ENCODE measurements at regions of chr13 and their contacts with region 1.

Region 1: GRCh38 chr13:32538621-32539246 is at the start of gene N4BP2L2:
- DNase-seq: peak; percentile 77
- ATAC-seq: peak; percentile 96
- H3K4me3 Mint-ChIP-seq: peak within 1 kb of the TSS; percentile 99
- H3K27ac Mint-ChIP-seq: peak within 1 kb of the TSS; percentile 100
- H3K4me1 Mint-ChIP-seq: peaks cover 50% of the 10 kb centered on the region
- H3K27me3 Mint-ChIP-seq: no peaks in the 10 kb centered on the region
- CTCF ChIP-seq: no peak
- total RNA-seq, gene N4BP2L2: 118 and 153 TPM in 2 replicates

Region 2: GRCh38 chr13:31161828-31162590 is 1376.7 kb before region 1 on chr13 and contains the start of gene HSPH1:
- CTCF ChIA-PET with region 1: no interaction called
- POLR2A ChIA-PET with region 1: no interaction called
- intact Hi-C with region 1: loop called (anchors 2 kb)
- DNase-seq: peak; percentile 99
- ATAC-seq: peak; percentile 85
- H3K4me3 Mint-ChIP-seq: peak within 1 kb of the TSS; percentile 97
- H3K27ac Mint-ChIP-seq: peak within 1 kb of the TSS; percentile 95
- H3K4me1 Mint-ChIP-seq: peaks cover 36% of the 10 kb centered on the region
- H3K27me3 Mint-ChIP-seq: no peaks in the 10 kb centered on the region
- CTCF ChIP-seq: no peak
- total RNA-seq, gene HSPH1: 107 and 112 TPM in 2 replicates

Region 3: DNA sequence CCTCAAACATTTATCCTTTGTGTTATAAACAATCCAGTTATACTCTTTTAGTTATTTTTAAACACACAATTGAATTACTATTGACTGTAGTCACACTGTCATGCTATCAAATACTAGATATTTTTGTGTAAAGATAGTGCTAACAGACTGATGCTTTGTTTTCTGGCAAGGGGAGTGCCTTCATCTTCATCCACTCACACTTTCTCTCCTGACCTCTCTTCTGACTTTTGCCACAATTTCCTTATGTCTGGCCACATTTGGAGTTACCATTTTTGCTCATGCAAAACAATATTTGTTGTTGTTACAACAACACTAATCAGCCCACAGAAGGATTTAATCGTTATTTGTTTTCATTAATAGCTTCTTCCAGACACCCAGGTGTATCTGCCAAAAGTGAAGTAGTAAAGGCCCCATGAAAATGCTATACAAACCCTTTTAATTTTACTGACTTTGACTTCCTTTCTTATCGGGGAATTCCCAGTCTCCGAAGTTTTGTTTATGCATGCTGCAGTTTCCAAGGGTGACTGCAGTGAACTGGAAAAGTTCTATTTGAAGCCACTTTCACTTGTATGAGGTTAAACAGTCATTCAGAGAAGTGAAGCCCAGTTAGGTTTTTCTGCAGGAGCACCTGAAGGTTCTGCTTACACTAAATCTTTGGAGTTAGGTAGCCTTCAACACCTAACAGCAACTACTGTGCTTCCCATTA is 573.2 kb before region 1 on chr13:
- CTCF ChIA-PET with region 1: no interaction called
- POLR2A ChIA-PET with region 1: no interaction called
- intact Hi-C with region 1: loop called (anchors 1 kb)
- DNase-seq: no peak
- ATAC-seq: peak; percentile 89
- H3K4me3 Mint-ChIP-seq: peak overlapping the region; percentile 30
- H3K27ac Mint-ChIP-seq: peak overlapping the region; percentile 91
- H3K4me1 Mint-ChIP-seq: peaks cover 46% of the 10 kb centered on the region
- H3K27me3 Mint-ChIP-seq: no peaks in the 10 kb centered on the region
- CTCF ChIP-seq: no peak

Region 4: GRCh38 chr13:32427852-32428580 is 110.7 kb before region 1 on chr13 and contains the start of gene N4BP2L1:
- CTCF ChIA-PET with region 1: no interaction called
- POLR2A ChIA-PET with region 1: interaction called, 20 read pairs
- intact Hi-C with region 1: loop called (anchors 1 kb)
- DNase-seq: peak; percentile 77
- ATAC-seq: peak; percentile 73
- H3K4me3 Mint-ChIP-seq: peak within 1 kb of the TSS; percentile 95
- H3K27ac Mint-ChIP-seq: peak within 1 kb of the TSS; percentile 99
- H3K4me1 Mint-ChIP-seq: peaks cover 48% of the 10 kb centered on the region
- H3K27me3 Mint-ChIP-seq: no peaks in the 10 kb centered on the region
- CTCF ChIP-seq: no peak
- total RNA-seq, gene N4BP2L1: 23.0 and 24.3 TPM in 2 replicates

Region 5: DNA sequence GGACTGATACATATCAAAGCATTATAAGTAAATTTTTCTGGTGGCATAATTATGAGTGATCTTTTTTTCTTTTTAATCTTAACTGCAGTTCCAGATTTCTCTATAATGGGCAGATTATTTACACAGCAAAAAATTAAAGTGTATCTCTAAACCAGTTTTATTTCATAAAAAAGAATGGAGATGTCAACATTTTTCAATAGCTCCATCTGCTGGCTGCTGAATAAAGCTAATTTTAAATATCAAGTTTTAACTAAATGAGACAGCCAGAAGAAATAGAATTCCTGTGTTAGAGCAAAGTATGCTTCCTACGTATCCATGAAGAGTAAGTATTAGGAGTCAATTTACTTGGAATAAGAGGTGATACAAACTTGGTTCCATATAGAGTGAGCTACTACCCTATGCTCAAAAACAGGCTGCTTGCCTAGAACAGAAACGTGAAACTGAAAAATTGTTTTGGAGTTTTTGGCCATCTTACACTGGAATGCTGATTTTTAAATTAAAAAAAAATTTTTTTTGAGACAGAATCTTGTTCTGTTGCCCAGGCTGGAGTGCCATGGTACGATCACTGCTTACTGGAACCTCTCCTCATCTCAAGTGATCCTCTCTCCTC is 42.5 kb after region 1 on chr13:
- CTCF ChIA-PET with region 1: interaction called, 15 read pairs
- POLR2A ChIA-PET with region 1: interaction called, 10 read pairs
- intact Hi-C with region 1: loop called (anchors 1 kb)
- DNase-seq: no peak
- ATAC-seq: no peak
- H3K4me3 Mint-ChIP-seq: no peak overlapping the region
- H3K27ac Mint-ChIP-seq: no peak overlapping the region
- H3K4me1 Mint-ChIP-seq: peaks cover 9% of the 10 kb centered on the region
- H3K27me3 Mint-ChIP-seq: no peaks in the 10 kb centered on the region
- CTCF ChIP-seq: no peak

Region 6: GRCh38 chr13:32669030-32669646 is 130.4 kb after region 1 on chr13:
- CTCF ChIA-PET with region 1: no interaction called
- POLR2A ChIA-PET with region 1: no interaction called
- intact Hi-C with region 1: loop called (anchors 1 kb)
- DNase-seq: no peak
- ATAC-seq: no peak
- H3K4me3 Mint-ChIP-seq: no peak overlapping the region
- H3K27ac Mint-ChIP-seq: no peak overlapping the region
- H3K4me1 Mint-ChIP-seq: peaks cover 3% of the 10 kb centered on the region
- H3K27me3 Mint-ChIP-seq: no peaks in the 10 kb centered on the region
- CTCF ChIP-seq: no peak

Region 7: GRCh38 chr13:33251131-33251661 is 712.5 kb after region 1 on chr13:
- CTCF ChIA-PET with region 1: no interaction called
- POLR2A ChIA-PET with region 1: no interaction called
- intact Hi-C with region 1: no loop called
- DNase-seq: no peak
- ATAC-seq: peak; percentile 40
- H3K4me3 Mint-ChIP-seq: no peak overlapping the region
- H3K27ac Mint-ChIP-seq: no peak overlapping the region
- H3K4me1 Mint-ChIP-seq: peaks cover 5% of the 10 kb centered on the region
- H3K27me3 Mint-ChIP-seq: no peaks in the 10 kb centered on the region
- CTCF ChIP-seq: no peak

Measured in activated B cell treated with CpG ODN at 0.5 μM for 24 hours (primary cell).